RWPE1 (cell line): ENCODE measurements at regions of chr1 and their contacts with region 1.

Region 1: DNA sequence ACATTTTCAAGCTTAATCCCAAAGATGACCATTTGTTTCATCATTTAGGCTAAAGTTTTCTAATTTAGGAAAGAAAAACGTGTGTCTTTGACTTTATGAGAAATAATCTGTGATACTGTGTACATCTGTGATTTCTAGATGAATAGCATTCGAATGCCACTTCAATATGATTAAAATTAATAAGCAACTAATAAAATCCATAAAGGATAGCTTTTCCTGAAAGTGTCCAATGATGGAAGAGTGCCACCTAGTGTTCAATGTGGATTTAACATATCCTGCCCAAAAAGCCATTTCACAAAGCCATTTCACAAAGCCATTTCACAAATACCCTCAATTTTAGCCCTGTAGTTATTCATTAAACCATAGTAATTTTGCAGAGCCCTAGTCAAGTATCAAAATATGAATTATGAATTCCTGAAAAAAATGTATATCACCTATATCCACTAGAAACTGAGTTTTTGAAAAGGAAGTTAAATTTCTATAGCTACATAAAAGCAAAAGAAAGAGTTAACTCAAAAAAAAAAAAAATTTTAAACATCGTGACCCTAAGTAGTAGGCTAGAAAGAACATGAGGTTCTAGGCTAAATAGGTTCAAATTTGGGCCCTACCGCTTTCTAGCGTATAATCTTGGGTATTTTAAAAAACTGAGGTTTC is 19.1 kb downstream of the NME7 start:
- DNase-seq: no peak
- H3K27ac ChIP-seq: no peak overlapping the region
- CTCF ChIP-seq: peak; percentile 82

Region 2: DNA sequence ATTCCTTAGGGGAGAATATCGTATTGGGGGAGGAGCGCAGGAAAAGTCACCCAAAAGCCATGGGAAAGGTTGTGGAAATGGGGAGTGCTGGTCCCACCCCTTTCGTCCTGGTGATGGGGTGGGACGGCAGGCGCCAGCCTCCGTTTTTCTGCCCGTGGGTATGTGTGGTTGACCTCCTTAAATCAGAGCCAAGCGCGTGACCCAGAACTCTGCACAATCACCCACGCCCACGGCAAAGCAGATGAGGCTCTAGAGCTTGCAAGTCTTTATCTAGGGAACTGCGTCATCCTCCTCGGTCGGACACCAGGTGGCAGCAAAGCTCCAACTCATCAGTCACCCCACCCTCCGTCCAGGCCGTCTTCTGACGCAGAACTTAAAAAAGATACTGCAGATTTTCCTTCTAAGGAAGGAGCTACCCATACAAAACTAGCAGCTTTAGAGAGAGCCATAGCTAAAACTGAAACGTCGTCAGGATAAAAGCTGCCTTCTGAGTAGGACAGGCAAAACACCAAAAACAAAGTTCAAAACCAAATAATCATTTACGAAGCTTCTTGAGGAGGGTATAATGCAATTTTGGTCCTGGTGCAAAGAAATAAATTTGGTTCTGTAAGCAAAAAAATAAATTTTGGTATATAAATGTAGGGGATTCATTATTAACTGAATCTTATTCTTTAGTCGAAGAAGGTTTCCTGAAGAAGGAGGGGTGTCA is 1005.8 kb before region 1 on chr1:
- CTCF ChIA-PET with region 1: interaction called, 25 read pairs
- POLR2A ChIA-PET with region 1: no interaction called
- DNase-seq: peak; percentile 72
- H3K27ac ChIP-seq: no peak overlapping the region
- CTCF ChIP-seq: peak; percentile 78

Region 3: GRCh38 chr1:168439456-168440375 is 908.8 kb before region 1 on chr1:
- CTCF ChIA-PET with region 1: interaction called, 11 read pairs
- POLR2A ChIA-PET with region 1: no interaction called
- DNase-seq: peak; percentile 41
- H3K27ac ChIP-seq: no peak overlapping the region
- CTCF ChIP-seq: peak; percentile 64

Region 4: GRCh38 chr1:168603501-168604110 is 744.9 kb before region 1 on chr1:
- CTCF ChIA-PET with region 1: interaction called, 12 read pairs
- POLR2A ChIA-PET with region 1: no interaction called
- DNase-seq: peak; percentile 36
- H3K27ac ChIP-seq: no peak overlapping the region
- CTCF ChIP-seq: peak; percentile 63

Region 5: GRCh38 chr1:169295425-169295824 is 53.1 kb before region 1 on chr1:
- CTCF ChIA-PET with region 1: no interaction called
- POLR2A ChIA-PET with region 1: no interaction called
- DNase-seq: no peak
- H3K27ac ChIP-seq: no peak overlapping the region
- CTCF ChIP-seq: no peak

Region 6: GRCh38 chr1:169330927-169331326 is 17.6 kb before region 1 on chr1:
- CTCF ChIA-PET with region 1: no interaction called
- POLR2A ChIA-PET with region 1: no interaction called
- DNase-seq: no peak
- H3K27ac ChIP-seq: no peak overlapping the region
- CTCF ChIP-seq: no peak